Naive thymus-derived CD4-positive, alpha-beta T cell (primary cell): ENCODE measurements at regions of chr19 and their contacts with region 1.

Region 1: GRCh38 chr19:1269065-1269477 is at the start of gene CIRBP:
- DNase-seq: peak; percentile 95 to 99 (median 98)
- ATAC-seq: peak; percentile 90
- H3K4me3 ChIP-seq: peak within 1 kb of the TSS; percentile 76
- H3K4me3 Mint-ChIP-seq: peak within 1 kb of the TSS; percentile 88 to 96 (median 90)
- H3K27ac ChIP-seq: peak within 1 kb of the TSS; percentile 82
- H3K27ac Mint-ChIP-seq: peak within 1 kb of the TSS; percentile 87 to 94 (median 91)
- H3K4me1 ChIP-seq: peaks cover 60 to 61% of the 10 kb centered on the region in 2 donors
- H3K4me1 Mint-ChIP-seq: peaks cover 52 to 76% (median 62%) of the 10 kb centered on the region in 7 donors
- H3K27me3 ChIP-seq: no peaks in the 10 kb centered on the region
- H3K27me3 Mint-ChIP-seq: peaks cover 0 to 6% (median 0%) of the 10 kb centered on the region in 5 donors
- total RNA-seq, gene CIRBP: 237 to 629 (median 524) TPM

Region 2: DNA sequence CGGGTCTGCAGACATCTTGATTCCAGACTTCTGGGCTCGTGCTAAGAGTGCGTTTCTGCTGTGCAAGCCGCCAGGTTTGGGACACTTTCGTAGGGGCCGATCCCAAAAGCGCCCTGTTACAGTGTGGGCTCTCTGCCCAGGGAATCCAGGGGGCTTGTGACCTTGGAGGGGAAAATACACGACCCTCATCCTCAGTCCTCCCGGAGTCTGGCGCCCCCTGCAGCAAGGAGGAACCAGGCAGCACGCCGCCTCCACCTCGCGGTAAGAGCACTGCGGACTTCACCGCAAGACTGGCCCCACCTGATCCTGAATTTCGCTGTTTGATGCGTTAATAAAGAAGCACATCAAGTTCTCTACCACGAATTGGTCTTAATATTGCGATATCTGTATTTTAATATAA is 640.9 kb before region 1 on chr19:
- CTCF ChIA-PET with region 1: no interaction called
- POLR2A ChIA-PET with region 1: no interaction called
- intact Hi-C with region 1: no loop called
- DNase-seq: no peak
- ATAC-seq: no peak
- H3K4me3 ChIP-seq: no peak overlapping the region
- H3K4me3 Mint-ChIP-seq: no peak overlapping the region
- H3K27ac ChIP-seq: no peak overlapping the region
- H3K27ac Mint-ChIP-seq: no peak overlapping the region
- H3K4me1 ChIP-seq: peaks cover 0 to 8% of the 10 kb centered on the region in 2 donors
- H3K4me1 Mint-ChIP-seq: peaks cover 10 to 32% (median 19%) of the 10 kb centered on the region in 7 donors
- H3K27me3 ChIP-seq: no peaks in the 10 kb centered on the region
- H3K27me3 Mint-ChIP-seq: no peaks in the 10 kb centered on the region

Region 3: GRCh38 chr19:1039646-1040475 is 229.2 kb before region 1 on chr19 and contains the start of gene ABCA7:
- CTCF ChIA-PET with region 1: interaction called, 4 read pairs
- POLR2A ChIA-PET with region 1: interaction called, 12 read pairs
- intact Hi-C with region 1: no loop called
- DNase-seq: peak; percentile 98 to 100 (median 99)
- ATAC-seq: peak; percentile 96
- H3K4me3 ChIP-seq: peak within 1 kb of the TSS; percentile 74
- H3K4me3 Mint-ChIP-seq: peak within 1 kb of the TSS; percentile 95 to 100 (median 98)
- H3K27ac ChIP-seq: peak within 1 kb of the TSS; percentile 74
- H3K27ac Mint-ChIP-seq: peak within 1 kb of the TSS; percentile 79 to 98 (median 95)
- H3K4me1 ChIP-seq: peaks cover 30 to 42% of the 10 kb centered on the region in 2 donors
- H3K4me1 Mint-ChIP-seq: peaks cover 29 to 61% (median 54%) of the 10 kb centered on the region in 7 donors
- H3K27me3 ChIP-seq: no peaks in the 10 kb centered on the region
- H3K27me3 Mint-ChIP-seq: no peaks in the 10 kb centered on the region
- total RNA-seq, gene ABCA7: 57.8 to 323 (median 155) TPM

Region 4: DNA sequence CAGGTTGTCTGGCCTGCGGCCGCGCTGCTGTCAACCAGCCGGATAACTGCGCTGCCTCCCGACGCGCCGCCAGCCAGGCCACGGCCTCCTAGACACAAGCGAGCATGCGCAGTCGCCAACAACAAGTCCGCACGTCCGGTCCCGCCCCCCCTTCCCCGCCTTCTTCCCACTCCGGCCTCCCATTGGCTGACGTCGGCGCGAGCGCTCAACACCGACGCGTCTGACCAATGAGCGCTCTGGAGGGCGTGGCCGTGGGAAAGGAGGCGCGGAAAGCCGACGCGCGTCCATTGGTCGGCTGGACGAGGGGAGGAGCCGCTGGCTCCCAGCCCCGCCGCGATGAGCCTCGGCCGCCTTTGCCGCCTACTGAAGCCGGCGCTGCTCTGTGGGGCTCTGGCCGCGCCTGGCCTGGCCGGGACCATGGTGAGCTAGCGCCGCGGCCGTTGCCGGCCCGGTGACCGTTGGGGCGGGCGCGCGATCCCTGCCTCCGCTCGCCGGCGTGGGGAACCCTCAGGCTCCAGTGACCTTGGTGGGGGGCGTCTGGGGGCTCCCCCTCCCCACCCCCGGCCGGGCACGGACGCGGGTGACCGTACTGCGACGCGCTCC is 165.3 kb before region 1 on chr19 and contains the start of gene GPX4:
- CTCF ChIA-PET with region 1: no interaction called
- POLR2A ChIA-PET with region 1: interaction called, 8 read pairs
- intact Hi-C with region 1: loop called in 1 of 2 experiments (anchors 1 kb)
- DNase-seq: peak; percentile 90 to 98 (median 95)
- ATAC-seq: peak; percentile 91
- H3K4me3 ChIP-seq: peak within 1 kb of the TSS; percentile 79
- H3K4me3 Mint-ChIP-seq: peak within 1 kb of the TSS; percentile 66 to 82 (median 78)
- H3K27ac ChIP-seq: peak within 1 kb of the TSS; percentile 100
- H3K27ac Mint-ChIP-seq: peak within 1 kb of the TSS; percentile 79 to 96 (median 93)
- H3K4me1 ChIP-seq: peaks cover 13 to 18% of the 10 kb centered on the region in 2 donors
- H3K4me1 Mint-ChIP-seq: peaks cover 17 to 48% (median 36%) of the 10 kb centered on the region in 7 donors
- H3K27me3 ChIP-seq: no peaks in the 10 kb centered on the region
- H3K27me3 Mint-ChIP-seq: no peaks in the 10 kb centered on the region
- total RNA-seq, gene GPX4: 122 to 235 (median 194) TPM

Region 5: GRCh38 chr19:1189419-1189818 is 79.7 kb before region 1 on chr19:
- CTCF ChIA-PET with region 1: interaction called, 4 read pairs
- POLR2A ChIA-PET with region 1: interaction called, 10 read pairs
- intact Hi-C with region 1: no loop called
- DNase-seq: peak in 1 of 9 donors; percentile 67
- ATAC-seq: peak; percentile 57
- H3K4me3 ChIP-seq: no peak overlapping the region
- H3K4me3 Mint-ChIP-seq: peak overlapping the region in 5 of 10 donors; percentile 33 to 63 (median 58)
- H3K27ac ChIP-seq: no peak overlapping the region
- H3K27ac Mint-ChIP-seq: peak overlapping the region; percentile 44 to 94 (median 79)
- H3K4me1 ChIP-seq: peaks cover 21 to 25% of the 10 kb centered on the region in 2 donors
- H3K4me1 Mint-ChIP-seq: peaks cover 11 to 27% (median 18%) of the 10 kb centered on the region in 7 donors
- H3K27me3 ChIP-seq: no peaks in the 10 kb centered on the region
- H3K27me3 Mint-ChIP-seq: no peaks in the 10 kb centered on the region

Region 6: GRCh38 chr19:1241417-1242095 is 27.5 kb before region 1 on chr19 and contains the start of gene ATP5F1D:
- CTCF ChIA-PET with region 1: interaction called, 164 read pairs
- POLR2A ChIA-PET with region 1: interaction called, 366 read pairs
- intact Hi-C with region 1: loop called (anchors 1 kb)
- DNase-seq: peak; percentile 76 to 91 (median 85)
- ATAC-seq: peak; percentile 74
- H3K4me3 ChIP-seq: peak within 1 kb of the TSS; percentile 57
- H3K4me3 Mint-ChIP-seq: peak within 1 kb of the TSS; percentile 86 to 96 (median 90)
- H3K27ac ChIP-seq: peak within 1 kb of the TSS; percentile 82
- H3K27ac Mint-ChIP-seq: peak within 1 kb of the TSS; percentile 81 to 96 (median 93)
- H3K4me1 ChIP-seq: peaks cover 29 to 33% of the 10 kb centered on the region in 2 donors
- H3K4me1 Mint-ChIP-seq: peaks cover 16 to 47% (median 25%) of the 10 kb centered on the region in 7 donors
- H3K27me3 ChIP-seq: no peaks in the 10 kb centered on the region
- H3K27me3 Mint-ChIP-seq: peaks cover 4 to 18% (median 9%) of the 10 kb centered on the region in 5 donors
- total RNA-seq, gene ATP5F1D: 90.6 to 178 (median 102) TPM

Region 7: GRCh38 chr19:1324806-1325567 is 55.9 kb after region 1 on chr19:
- CTCF ChIA-PET with region 1: no interaction called
- POLR2A ChIA-PET with region 1: no interaction called
- intact Hi-C with region 1: no loop called
- DNase-seq: peak in 6 of 9 donors; percentile 7 to 32 (median 17)
- ATAC-seq: peak; percentile 68
- H3K4me3 ChIP-seq: no peak overlapping the region
- H3K4me3 Mint-ChIP-seq: peak overlapping the region in 5 of 10 donors; percentile 32 to 69 (median 57)
- H3K27ac ChIP-seq: no peak overlapping the region
- H3K27ac Mint-ChIP-seq: no peak overlapping the region
- H3K4me1 ChIP-seq: peaks cover 0 to 6% of the 10 kb centered on the region in 2 donors
- H3K4me1 Mint-ChIP-seq: peaks cover 0 to 11% (median 6%) of the 10 kb centered on the region in 7 donors
- H3K27me3 ChIP-seq: peaks cover 5 to 7% of the 10 kb centered on the region in 2 donors
- H3K27me3 Mint-ChIP-seq: peaks cover 23 to 37% (median 28%) of the 10 kb centered on the region in 5 donors

Region 8: DNA sequence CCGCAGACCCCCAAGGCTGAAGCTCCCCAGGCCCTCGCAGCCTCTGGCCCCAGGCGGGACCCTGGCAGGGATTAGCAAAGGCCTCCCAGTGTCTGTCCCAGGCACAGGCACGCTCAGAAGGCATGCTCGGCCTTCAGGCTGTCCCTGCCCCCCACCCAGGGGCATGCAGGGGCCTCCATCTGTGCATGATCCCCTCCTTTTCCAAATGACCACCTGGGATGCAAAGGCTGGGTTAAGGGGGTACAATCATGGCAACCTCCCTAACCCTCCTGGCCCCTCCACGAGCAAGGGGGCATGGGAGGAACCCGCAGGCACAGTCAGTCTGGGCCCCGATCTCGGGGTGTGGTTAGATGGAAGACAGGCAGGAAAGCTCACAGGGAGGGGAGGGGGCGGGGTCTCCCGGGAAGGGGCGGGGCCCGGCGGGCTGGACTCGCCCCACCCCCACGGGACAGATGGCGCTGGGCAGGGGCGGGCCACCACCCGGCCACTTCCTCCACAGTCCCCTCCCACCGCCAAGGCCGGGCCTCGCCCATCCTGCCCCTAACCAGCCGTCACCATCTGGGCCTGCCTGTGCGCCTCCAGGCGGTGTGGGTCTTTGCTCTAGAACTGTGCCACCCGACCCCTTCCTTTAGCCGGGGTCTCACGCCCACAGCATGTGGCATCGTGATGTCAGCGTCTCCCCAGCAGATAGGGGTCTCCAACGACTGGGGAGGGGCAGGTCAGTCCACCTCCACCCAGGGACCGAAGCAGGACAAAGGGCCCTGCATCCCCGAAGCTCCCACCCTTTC is 586.2 kb after region 1 on chr19:
- CTCF ChIA-PET with region 1: no interaction called
- POLR2A ChIA-PET with region 1: interaction called, 3 read pairs
- intact Hi-C with region 1: loop called in 1 of 2 experiments (anchors 10 kb)
- DNase-seq: peak; percentile 58 to 89 (median 73)
- ATAC-seq: peak; percentile 78
- H3K4me3 ChIP-seq: peak overlapping the region; percentile 84
- H3K4me3 Mint-ChIP-seq: peak overlapping the region; percentile 79 to 91 (median 87)
- H3K27ac ChIP-seq: peak overlapping the region; percentile 93
- H3K27ac Mint-ChIP-seq: peak overlapping the region; percentile 82 to 96 (median 91)
- H3K4me1 ChIP-seq: peaks cover 28 to 76% of the 10 kb centered on the region in 2 donors
- H3K4me1 Mint-ChIP-seq: peaks cover 11 to 66% (median 51%) of the 10 kb centered on the region in 7 donors
- H3K27me3 ChIP-seq: no peaks in the 10 kb centered on the region
- H3K27me3 Mint-ChIP-seq: no peaks in the 10 kb centered on the region

Region 9: GRCh38 chr19:2171349-2172145 is 902.5 kb after region 1 on chr19:
- CTCF ChIA-PET with region 1: no interaction called
- POLR2A ChIA-PET with region 1: no interaction called
- intact Hi-C with region 1: no loop called
- DNase-seq: peak in 5 of 9 donors; percentile 27 to 81 (median 38)
- ATAC-seq: peak; percentile 58
- H3K4me3 ChIP-seq: no peak overlapping the region
- H3K4me3 Mint-ChIP-seq: no peak overlapping the region
- H3K27ac ChIP-seq: peak overlapping the region; percentile 60
- H3K27ac Mint-ChIP-seq: peak overlapping the region in 2 of 9 donors; percentile 14 to 18
- H3K4me1 ChIP-seq: peaks cover 14 to 25% of the 10 kb centered on the region in 2 donors
- H3K4me1 Mint-ChIP-seq: peaks cover 19 to 70% (median 35%) of the 10 kb centered on the region in 7 donors
- H3K27me3 ChIP-seq: no peaks in the 10 kb centered on the region
- H3K27me3 Mint-ChIP-seq: no peaks in the 10 kb centered on the region